Right cardiac atrium (tissue), 5 donors: ENCODE measurements at regions of chr1 and their contacts with region 1.

Region 1: GRCh38 chr1:25520446-25521061 is 22.9 kb upstream of the LDLRAP1 start:
- DNase-seq: peak in 2 of 3 donors; percentile 63 to 82
- ATAC-seq: peak in 1 of 2 donors; percentile 34
- H3K4me3 ChIP-seq: no peak overlapping the region
- H3K27ac ChIP-seq: no peak overlapping the region
- H3K4me1 ChIP-seq: no peaks in the 10 kb centered on the region
- H3K27me3 ChIP-seq: no peaks in the 10 kb centered on the region

Region 2: GRCh38 chr1:25425098-25426085 is 95.2 kb before region 1 on chr1:
- intact Hi-C with region 1: loop called in 2 of 4 experiments (anchors 10 kb)
- DNase-seq: no peak
- ATAC-seq: no peak
- H3K4me3 ChIP-seq: no peak overlapping the region
- H3K27ac ChIP-seq: no peak overlapping the region
- H3K4me1 ChIP-seq: no peaks in the 10 kb centered on the region
- H3K27me3 ChIP-seq: no peaks in the 10 kb centered on the region